ENCODE measurements at regions of chr10 and their contacts with region 1.

Region 1: GRCh38 chr10:124388823-124389612 is 29.7 kb downstream of the OAT start:
- DNase-seq: peak; percentile 97

Region 2: DNA sequence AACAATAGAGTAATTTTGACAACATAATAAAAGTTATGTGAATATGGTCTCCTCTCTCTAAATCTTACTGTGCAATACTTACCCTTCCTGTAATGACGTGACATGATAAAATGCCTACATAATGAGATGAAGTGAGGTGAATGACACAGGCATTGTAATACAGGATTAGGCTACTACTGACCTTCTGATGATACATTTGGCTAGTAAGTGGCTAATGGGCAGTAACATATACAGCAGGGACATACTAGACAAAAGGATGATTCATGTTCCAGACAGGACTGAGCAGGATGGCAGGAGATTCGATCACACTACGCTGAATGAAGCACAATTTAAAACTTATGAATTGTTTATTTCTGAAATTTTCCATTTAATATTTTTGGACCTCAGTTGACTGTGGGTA is 1439.7 kb before region 1 on chr10:
- intact Hi-C with region 1: no loop called
- DNase-seq: no peak

Region 3: DNA sequence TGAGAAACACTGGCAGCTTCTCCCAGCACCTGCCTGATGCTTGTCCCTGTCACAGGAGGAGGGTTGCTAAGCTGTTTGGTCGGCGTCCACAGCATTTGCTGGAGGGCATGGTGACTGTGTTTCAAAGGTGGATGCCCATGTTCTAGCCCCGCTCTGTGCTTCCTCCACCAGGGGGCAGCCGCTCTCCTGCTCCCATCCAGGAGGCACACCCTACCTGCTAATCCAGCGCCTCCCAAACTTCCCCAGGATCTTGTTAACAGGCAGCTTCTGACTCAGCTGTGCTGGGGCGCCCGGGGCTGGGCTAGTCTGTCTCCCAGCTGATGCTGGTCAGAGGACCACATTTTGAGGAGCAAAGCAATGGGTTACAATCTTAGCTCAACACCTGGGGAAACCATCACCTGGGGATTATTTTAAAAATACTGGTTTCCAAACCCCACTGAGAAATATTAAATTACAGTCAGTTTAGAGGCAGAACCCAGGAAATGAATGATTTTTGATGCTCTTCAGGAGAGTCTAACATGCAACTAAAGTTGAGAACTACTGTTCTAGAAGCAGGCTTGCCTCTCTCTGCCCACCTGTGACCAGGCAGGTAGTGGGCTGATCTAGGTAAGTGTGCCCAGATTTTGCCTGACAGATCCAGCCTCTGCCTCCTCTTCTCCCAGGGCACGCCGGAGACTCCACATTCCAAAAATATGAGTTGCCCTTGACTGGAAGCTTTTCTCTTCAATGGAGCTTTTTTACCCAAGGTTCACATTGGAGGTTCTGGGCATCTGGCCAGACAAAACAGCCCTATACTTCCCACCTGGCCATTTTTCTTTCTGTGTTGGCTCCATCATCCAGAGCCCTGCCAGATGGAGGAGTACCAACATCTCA is 815.5 kb before region 1 on chr10:
- intact Hi-C with region 1: loop called in 1 of 2 experiments (anchors 10 kb)
- DNase-seq: peak; percentile 79

Region 4: GRCh38 chr10:123582084-123582989 is 806.7 kb before region 1 on chr10:
- intact Hi-C with region 1: loop called (anchors 10 kb)
- DNase-seq: peak; percentile 94

Region 5: DNA sequence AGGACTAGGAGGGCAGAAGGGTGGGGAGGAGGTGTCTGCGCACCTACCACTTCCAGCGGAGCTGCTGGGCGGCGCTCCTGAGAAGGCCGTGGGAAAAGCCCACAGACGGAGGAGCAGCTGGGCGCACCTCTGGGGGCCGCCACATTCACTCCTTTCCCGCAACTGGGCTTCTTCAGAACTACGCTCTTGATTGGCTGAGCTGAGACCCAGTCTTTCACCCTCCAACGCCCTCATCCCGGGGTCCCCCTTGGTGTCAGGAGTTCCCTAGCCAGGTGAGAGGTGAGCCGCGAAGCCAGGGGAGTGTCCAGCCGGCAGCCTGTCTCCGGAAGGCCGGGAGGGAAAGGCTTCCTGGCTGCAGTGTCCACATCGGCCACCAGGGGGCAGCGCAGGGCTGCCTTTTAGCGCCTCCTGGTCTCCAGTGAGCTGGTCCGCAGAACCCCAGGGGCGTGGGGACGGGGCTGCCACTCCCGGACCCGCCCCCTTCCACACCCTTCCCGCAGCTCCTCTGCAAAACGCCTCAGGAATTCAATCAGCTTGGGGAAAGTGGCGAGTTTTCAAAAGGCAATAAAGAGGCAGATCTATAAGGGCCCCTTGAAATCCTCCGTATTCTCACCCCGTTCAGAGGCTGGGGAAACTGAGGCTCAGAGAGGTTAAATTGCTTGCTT is 394.5 kb before region 1 on chr10:
- intact Hi-C with region 1: loop called (anchors 1 to 5 kb)
- DNase-seq: peak; percentile 96

Region 6: DNA sequence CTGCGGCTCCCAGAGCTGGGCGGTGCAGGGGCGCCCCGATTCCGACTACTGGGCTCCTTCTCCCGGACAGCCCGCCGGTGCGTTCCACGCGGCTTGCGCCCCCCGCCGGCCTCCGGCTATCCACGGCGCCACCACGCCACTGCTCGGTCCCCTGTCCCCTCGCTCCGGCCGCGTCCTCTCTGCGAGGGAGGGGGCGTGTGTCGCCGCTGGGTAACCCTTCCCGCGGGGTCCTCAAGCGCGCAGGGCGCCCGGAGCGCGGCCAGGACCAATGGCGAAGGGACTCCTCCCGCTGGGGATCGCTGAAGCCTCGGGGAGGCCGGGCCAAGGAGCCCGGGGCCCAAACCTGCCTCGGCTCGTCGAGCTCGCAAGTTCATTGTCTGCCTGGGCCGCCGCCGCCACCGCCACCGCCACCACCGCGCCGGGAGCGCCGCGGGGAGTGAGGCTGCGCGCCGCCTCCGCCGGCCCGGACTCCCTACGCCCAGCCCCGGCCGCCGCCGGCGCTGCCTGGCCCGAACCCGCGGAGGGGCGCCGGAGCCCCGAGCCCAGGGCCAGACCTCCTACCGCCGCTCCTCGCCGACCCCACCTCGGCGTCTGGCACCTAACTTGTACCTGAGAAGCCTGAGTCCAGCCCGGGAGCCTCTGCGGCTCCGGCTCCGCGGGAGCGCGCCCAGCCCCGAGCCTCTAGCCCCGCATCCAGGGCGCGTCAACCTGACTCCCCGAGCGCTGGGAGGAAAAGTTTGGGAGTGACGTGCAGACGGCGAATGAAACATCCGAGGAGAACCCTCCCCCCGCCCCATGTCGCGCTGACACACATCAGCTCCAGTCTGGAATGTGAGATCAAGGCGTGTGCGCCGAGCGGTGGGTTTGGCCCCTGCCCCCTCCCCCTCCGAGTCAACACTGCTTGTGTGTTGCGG is 295.9 kb before region 1 on chr10 and contains the start of gene CHST15:
- intact Hi-C with region 1: loop called in 1 of 2 experiments (anchors 10 kb)
- DNase-seq: peak; percentile 84
- total RNA-seq, gene CHST15: 25.8 to 30.1 TPM

Region 7: GRCh38 chr10:124249812-124250432 is 139.1 kb before region 1 on chr10:
- intact Hi-C with region 1: no loop called
- DNase-seq: no peak

Measured in posterior vena cava (tissue), 2 donors.